Ascending aorta (tissue), 2 donors: ENCODE measurements at regions of chr15 and their contacts with region 1.

Region 1: GRCh38 chr15:39920510-39921273 is 626 bp upstream of the GPR176 start:
- DNase-seq: peak; percentile 27 to 89
- H3K4me3 ChIP-seq: peak overlapping the region; percentile 80 to 88
- H3K27ac ChIP-seq: peak overlapping the region; percentile 92 to 94
- H3K4me1 ChIP-seq: no peaks in the 10 kb centered on the region
- H3K27me3 ChIP-seq: no peaks in the 10 kb centered on the region
- CTCF ChIP-seq: no peak

Region 2: GRCh38 chr15:39934397-39935071 is 13.8 kb after region 1 on chr15:
- intact Hi-C with region 1: loop called (anchors 1 kb)
- DNase-seq: no peak
- H3K4me3 ChIP-seq: peak overlapping the region; percentile 82 to 88
- H3K27ac ChIP-seq: peak overlapping the region; percentile 88 to 91
- H3K4me1 ChIP-seq: peaks cover 9 to 26% of the 10 kb centered on the region in 2 donors
- H3K27me3 ChIP-seq: no peaks in the 10 kb centered on the region
- CTCF ChIP-seq: no peak

Region 3: GRCh38 chr15:41331833-41332787 is 1411.4 kb after region 1 on chr15 and contains the start of gene OIP5:
- intact Hi-C with region 1: no loop called
- DNase-seq: peak; percentile 96 to 99
- H3K4me3 ChIP-seq: peak within 1 kb of the TSS; percentile 89 to 91
- H3K27ac ChIP-seq: peak within 1 kb of the TSS in 1 of 2 donors; percentile 40
- H3K4me1 ChIP-seq: peaks cover 0 to 8% of the 10 kb centered on the region in 2 donors
- H3K27me3 ChIP-seq: no peaks in the 10 kb centered on the region
- CTCF ChIP-seq: peak; percentile 59 to 74 (median 67)
- total RNA-seq, gene OIP5: not detected